ENCODE measurements at regions of chr1 and their contacts with region 1.

Region 1: GRCh38 chr1:51423073-51423821 is 92.9 kb upstream of the TTC39A start:
- DNase-seq: peak in 2 of 4 experiments; percentile 48 to 76
- ATAC-seq: peak; percentile 81
- H3K4me3 ChIP-seq: no peak overlapping the region
- H3K27ac ChIP-seq: peak overlapping the region; percentile 66
- H3K4me1 ChIP-seq: peaks cover 7 to 33% of the 10 kb centered on the region in 2 experiments
- H3K27me3 ChIP-seq: no peaks in the 10 kb centered on the region
- CTCF ChIP-seq: no peak
- EP300 ChIP-seq: peak; percentile 75
- POLR2A ChIP-seq: no peak
- RAD21 ChIP-seq: no peak; a peak in 1 of 4 replicates

Region 2: DNA sequence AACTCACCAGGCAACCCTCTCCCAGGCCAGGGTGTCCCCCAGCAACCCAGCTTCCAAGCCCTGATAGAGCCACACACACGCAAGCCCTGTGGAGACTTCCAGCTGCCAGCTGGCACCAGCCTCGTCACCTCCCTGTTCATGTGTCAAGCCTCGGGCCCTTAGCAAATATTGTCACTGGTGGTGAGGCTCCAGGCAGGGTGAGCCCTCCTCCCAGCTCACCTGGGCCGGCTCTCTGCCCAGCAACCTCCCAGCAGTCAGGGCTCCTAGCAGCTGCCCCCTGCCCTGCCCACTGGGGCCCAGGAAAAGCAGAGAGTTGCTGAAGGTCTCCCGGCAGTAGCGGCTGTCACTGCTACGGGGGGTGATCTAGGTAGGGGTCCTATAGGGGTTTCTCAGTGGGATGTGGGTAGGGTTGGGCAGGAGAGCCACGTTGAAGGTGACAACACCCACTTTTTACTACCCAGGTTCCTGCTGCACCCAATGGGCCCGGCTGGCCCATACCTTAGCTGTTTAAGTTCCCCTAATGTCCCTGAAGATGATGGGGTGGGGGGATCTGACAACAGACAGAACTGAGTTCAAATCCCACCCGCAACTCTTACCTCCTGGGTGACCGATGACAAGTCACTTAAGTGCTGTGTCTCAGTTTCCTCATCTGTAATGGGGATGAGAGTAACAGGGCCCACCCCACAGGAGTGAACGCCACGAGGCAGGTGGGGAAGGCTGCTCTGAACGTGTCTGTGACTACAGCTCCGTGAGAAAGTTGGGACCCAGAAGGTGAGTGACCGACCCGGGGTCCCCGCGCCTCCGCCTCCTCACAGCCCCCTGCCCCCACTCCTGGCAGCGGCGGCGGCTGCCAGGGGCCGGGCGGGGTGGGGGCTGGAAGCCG is 93.6 kb before region 1 on chr1:
- CTCF ChIA-PET with region 1: no interaction called
- POLR2A ChIA-PET with region 1: no interaction called
- in situ Hi-C with region 1: no loop called
- intact Hi-C with region 1: no loop called
- DNase-seq: no peak
- ATAC-seq: no peak
- H3K4me3 ChIP-seq: no peak overlapping the region
- H3K27ac ChIP-seq: no peak overlapping the region
- H3K4me1 ChIP-seq: peaks cover 41 to 42% of the 10 kb centered on the region in 2 experiments
- H3K27me3 ChIP-seq: no peaks in the 10 kb centered on the region
- CTCF ChIP-seq: no peak
- EP300 ChIP-seq: no peak
- POLR2A ChIP-seq: no peak
- RAD21 ChIP-seq: no peak

Region 3: DNA sequence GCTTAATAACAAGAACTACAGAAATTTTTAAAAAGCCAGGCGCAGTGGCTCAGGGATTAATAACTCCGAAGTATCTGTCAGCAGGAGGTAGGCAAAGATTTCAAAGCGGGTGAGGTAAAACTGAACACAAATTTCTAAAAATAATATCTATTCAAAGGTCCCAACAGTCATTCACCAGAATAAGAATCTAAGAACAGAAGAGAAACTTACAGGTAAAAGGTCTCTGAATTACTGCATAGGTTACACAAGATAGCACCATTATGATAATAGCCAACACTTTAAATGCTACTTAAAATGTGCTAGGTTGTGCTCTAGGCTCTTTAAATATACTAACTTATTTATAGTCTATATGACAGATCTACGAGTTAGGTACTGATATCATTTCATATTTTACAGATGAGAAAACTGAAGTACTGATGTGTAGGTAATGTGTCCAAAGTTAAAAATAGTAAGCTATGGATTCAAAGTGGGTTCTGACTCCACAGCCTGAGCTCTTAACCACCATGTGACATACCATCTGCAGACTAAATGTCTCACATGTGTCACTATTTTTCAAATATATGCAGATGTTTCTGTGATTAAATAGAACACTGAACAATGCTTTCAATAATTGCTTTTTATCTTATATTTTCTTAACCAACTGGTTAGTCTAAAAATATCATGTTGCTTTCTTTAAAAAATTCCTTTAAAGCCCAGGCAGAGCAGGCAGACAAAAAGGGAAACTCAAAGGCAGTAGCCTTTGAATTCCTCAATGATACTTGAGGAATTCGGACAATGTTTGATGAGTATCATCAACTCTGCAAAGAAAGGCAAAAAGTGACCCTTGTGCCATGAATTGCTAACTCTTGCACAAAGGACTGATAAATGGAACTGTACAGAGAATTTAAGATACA is 12.4 kb before region 1 on chr1:
- CTCF ChIA-PET with region 1: no interaction called
- POLR2A ChIA-PET with region 1: interaction called, 12 read pairs
- in situ Hi-C with region 1: no loop called
- intact Hi-C with region 1: no loop called
- DNase-seq: no peak
- ATAC-seq: no peak
- H3K4me3 ChIP-seq: no peak overlapping the region
- H3K27ac ChIP-seq: no peak overlapping the region
- H3K4me1 ChIP-seq: no peaks in the 10 kb centered on the region
- H3K27me3 ChIP-seq: no peaks in the 10 kb centered on the region
- CTCF ChIP-seq: no peak
- EP300 ChIP-seq: no peak
- POLR2A ChIP-seq: no peak
- RAD21 ChIP-seq: no peak

Region 4: DNA sequence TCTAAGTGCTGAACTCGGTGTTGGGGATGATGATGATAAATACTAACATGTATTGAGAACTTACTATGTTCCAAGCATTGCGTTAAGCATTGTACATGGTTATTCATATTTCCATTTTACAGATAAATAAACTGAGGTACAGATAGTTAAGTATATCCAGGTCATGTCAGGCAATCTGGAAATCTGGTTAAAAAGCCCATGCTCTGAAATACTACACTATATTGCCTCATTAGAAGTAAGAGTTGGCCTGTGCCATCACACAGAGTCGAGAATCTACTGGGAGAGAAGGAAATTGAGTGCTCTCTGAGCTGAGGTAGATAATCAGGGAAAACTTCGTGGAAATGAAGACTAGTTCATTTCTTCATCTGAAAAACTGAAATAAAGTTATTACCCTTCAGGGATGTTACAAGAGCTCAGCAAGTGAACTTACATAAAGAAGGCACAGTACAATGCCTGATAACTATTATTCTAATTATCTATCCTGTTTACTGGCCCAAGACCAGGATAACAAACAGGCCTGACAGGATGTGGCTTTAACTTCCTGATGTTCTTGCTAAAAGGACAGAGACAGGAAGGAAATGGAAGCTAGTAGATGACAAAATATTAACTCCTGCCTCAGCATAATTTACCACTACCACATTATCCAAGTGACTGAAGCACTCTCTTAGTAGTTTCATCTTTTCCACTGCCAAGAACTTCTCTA is 10.2 kb after region 1 on chr1:
- CTCF ChIA-PET with region 1: no interaction called
- POLR2A ChIA-PET with region 1: interaction called, 19 read pairs
- in situ Hi-C with region 1: no loop called
- intact Hi-C with region 1: no loop called
- DNase-seq: peak in 2 of 4 experiments; percentile 20 to 37
- ATAC-seq: peak; percentile 4; the same call in 2 of the 3 replicates
- H3K4me3 ChIP-seq: no peak overlapping the region
- H3K27ac ChIP-seq: peak overlapping the region; percentile 73
- H3K4me1 ChIP-seq: peaks cover 13 to 35% of the 10 kb centered on the region in 2 experiments
- H3K27me3 ChIP-seq: no peaks in the 10 kb centered on the region
- CTCF ChIP-seq: no peak
- EP300 ChIP-seq: peak; percentile 33; the same call in 1 of the 2 replicates
- POLR2A ChIP-seq: no peak
- RAD21 ChIP-seq: no peak

Region 5: DNA sequence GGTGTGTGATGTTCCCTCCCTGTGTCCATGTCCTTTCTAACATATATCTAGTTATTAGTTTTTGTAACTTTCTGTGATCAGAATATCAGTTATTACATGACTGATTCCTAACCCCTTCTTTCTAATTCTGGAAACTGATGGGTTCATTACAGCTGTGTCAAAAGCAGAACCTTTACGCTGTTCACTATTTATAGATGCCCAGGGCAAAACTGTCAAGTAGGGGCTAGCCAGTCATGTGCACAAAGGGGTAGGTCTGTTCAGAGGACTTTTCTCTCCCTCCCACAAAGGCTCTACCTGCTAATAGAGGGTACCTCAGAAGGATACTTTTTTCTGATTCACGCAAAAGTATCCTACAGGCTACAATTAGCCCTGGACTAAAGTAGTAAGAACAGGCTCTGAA is 376.1 kb after region 1 on chr1:
- CTCF ChIA-PET with region 1: no interaction called
- POLR2A ChIA-PET with region 1: no interaction called
- in situ Hi-C with region 1: no loop called
- intact Hi-C with region 1: no loop called
- DNase-seq: no peak
- ATAC-seq: no peak
- H3K4me3 ChIP-seq: no peak overlapping the region
- H3K27ac ChIP-seq: no peak overlapping the region
- H3K4me1 ChIP-seq: no peaks in the 10 kb centered on the region
- H3K27me3 ChIP-seq: no peaks in the 10 kb centered on the region
- CTCF ChIP-seq: no peak
- EP300 ChIP-seq: no peak
- POLR2A ChIP-seq: no peak
- RAD21 ChIP-seq: no peak